Activated CD4-positive, alpha-beta T cell treated with anti-CD3 and anti-CD28 coated beads, Interleukin-2, amount 10 ng/mL, durations not matched to agents 7 days and 5 days (primary cell): ENCODE measurements at regions of chr19 and their contacts with region 1.

Region 1: DNA sequence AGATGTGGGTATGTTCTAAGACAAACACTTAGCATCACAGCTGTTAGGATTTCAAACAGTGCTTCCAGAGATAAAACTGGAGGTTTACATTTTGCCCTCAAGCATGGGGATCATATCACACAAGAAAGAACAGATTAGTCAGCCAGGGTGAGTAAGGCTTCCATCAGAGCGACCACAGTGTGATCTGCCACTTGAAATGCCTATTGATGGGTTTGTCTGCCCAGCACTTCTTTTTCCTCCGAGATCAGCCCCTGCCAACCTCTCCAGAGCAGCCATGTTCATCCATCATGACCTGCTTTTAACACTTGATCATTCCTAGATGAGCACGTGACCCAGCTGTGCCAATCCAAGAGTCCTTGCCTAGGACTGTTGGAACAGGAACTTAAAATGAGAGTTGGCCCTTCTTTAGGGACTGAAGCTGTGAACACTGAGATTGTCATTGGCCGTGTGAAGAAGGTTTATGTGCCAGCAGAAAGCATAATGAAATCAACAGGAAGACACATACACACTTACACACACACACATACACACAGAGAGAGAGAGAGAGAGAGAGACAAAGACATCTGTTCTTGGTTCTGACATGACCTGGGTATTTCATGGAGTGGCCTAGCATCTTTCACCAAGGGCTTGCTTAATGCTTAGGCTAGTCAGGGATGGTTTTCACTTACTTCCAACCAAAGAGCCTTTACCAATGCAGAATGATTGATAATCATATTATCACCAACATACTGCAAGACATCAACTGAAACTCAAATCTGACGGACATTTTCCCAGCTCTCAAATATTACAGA is 5.2 kb upstream of the CEBPG start:
- DNase-seq: no peak
- H3K4me3 Mint-ChIP-seq: no peak overlapping the region
- H3K27ac Mint-ChIP-seq: no peak overlapping the region
- H3K4me1 Mint-ChIP-seq: peaks cover 12% of the 10 kb centered on the region
- H3K27me3 Mint-ChIP-seq: peaks cover 19% of the 10 kb centered on the region

Region 2: DNA sequence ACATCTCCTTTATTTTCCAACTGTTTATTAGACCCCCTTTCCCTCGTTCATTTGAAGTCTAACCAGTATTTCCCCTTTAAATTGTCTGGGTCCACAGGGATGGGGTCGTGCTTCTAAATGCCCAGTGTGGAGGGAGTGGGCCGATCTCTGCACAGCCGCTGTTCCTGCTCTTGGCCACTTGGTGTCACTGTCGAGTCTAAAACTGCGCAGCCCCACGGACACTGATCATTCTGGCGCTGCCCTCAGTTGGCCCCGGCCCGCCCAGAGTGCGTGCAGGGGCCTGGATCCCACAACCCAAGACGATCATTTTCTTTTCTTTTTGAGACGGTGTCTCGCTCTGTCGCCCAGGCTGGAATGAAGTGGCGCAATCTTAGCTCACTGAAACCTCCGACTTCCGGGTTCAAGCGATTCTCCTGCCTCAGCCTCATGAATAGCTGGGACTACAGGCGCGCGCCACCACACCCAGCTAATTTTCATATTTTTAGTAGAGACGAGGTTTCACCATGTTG is 224.3 kb before region 1 on chr19:
- CTCF ChIA-PET with region 1: no interaction called
- POLR2A ChIA-PET with region 1: interaction called, 13 read pairs
- DNase-seq: peak; percentile 69
- H3K4me3 Mint-ChIP-seq: no peak overlapping the region
- H3K27ac Mint-ChIP-seq: no peak overlapping the region
- H3K4me1 Mint-ChIP-seq: peaks cover 5% of the 10 kb centered on the region
- H3K27me3 Mint-ChIP-seq: no peaks in the 10 kb centered on the region

Region 3: GRCh38 chr19:33496038-33496895 is 128.0 kb after region 1 on chr19:
- CTCF ChIA-PET with region 1: no interaction called
- POLR2A ChIA-PET with region 1: no interaction called
- DNase-seq: no peak
- H3K4me3 Mint-ChIP-seq: no peak overlapping the region
- H3K27ac Mint-ChIP-seq: no peak overlapping the region
- H3K4me1 Mint-ChIP-seq: no peaks in the 10 kb centered on the region
- H3K27me3 Mint-ChIP-seq: no peaks in the 10 kb centered on the region